ENCODE measurements at regions of chr18 and their contacts with region 1.

Region 1: GRCh38 chr18:2325308-2325849 is 245.9 kb downstream of the METTL4 start:
- DNase-seq: peak; percentile 37 to 91 (median 57)
- ATAC-seq: peak; percentile 93
- H3K4me3 ChIP-seq: no peak overlapping the region
- H3K27ac ChIP-seq: peak overlapping the region; percentile 62
- H3K4me1 ChIP-seq: peaks cover 4 to 30% of the 10 kb centered on the region in 2 experiments; a peak in 4 of 5 replicates
- H3K27me3 ChIP-seq: no peaks in the 10 kb centered on the region
- CTCF ChIP-seq: peak in 1 of 3 experiments; percentile 46; a peak in 2 of 6 replicates
- EP300 ChIP-seq: peak; percentile 97
- POLR2A ChIP-seq: no peak
- RAD21 ChIP-seq: peak; percentile 43 to 55

Region 2: GRCh38 chr18:1604751-1605150 is 720.6 kb before region 1 on chr18:
- CTCF ChIA-PET with region 1: no interaction called
- POLR2A ChIA-PET with region 1: no interaction called
- in situ Hi-C with region 1: no loop called
- intact Hi-C with region 1: no loop called
- DNase-seq: no peak
- ATAC-seq: no peak
- H3K4me3 ChIP-seq: no peak overlapping the region
- H3K27ac ChIP-seq: no peak overlapping the region
- H3K4me1 ChIP-seq: no peaks in the 10 kb centered on the region
- H3K27me3 ChIP-seq: no peaks in the 10 kb centered on the region
- CTCF ChIP-seq: no peak
- EP300 ChIP-seq: no peak
- POLR2A ChIP-seq: no peak
- RAD21 ChIP-seq: no peak

Region 3: DNA sequence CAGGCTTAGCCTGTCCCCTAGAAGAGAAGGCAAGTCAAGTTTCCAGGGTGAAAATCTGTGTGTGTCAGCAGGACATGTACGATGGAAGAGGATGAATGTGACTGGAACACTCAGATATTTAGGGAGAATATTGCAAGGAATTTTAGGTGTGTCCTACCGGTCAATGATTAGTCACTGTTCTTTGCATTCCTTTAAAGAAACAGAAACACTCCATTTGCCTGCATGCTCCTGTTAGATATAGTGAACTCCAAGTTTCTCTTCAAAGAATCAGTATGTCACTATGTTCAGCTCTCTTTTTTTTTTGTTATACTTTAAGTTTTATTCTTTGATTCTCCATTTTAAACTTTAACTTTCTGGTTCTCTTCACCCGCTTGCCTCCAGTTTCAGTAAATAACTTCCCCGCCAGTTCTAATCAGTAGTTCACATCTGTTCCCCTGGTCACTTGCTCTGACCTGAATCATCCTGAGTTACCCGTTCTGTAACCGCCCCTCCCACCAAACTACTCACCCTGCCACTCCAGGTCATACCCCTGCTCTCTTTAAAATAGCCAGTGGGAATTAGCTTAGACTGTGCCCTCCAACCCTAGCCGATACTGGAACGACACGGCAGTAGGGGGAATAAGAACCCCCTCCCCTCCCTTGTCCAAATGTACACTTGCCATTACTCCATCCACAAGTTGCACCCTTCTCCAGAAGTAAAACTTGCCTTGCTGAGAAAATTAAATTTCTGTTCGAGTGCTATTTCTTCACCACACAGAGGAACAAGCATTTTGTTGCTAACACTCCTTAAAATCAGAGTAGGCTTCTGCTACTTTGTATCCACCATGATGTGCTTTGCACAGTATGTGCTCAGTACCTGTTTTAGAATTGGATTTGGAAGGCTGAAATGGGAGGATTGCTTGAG is 22.5 kb before region 1 on chr18:
- CTCF ChIA-PET with region 1: no interaction called
- POLR2A ChIA-PET with region 1: interaction called, 6 read pairs
- in situ Hi-C with region 1: no loop called
- intact Hi-C with region 1: loop called (anchors 1 kb)
- DNase-seq: peak; percentile 77 to 93 (median 84)
- ATAC-seq: peak; percentile 93
- H3K4me3 ChIP-seq: no peak overlapping the region
- H3K27ac ChIP-seq: peak overlapping the region; percentile 96
- H3K4me1 ChIP-seq: peaks cover 12 to 47% of the 10 kb centered on the region in 2 experiments; a peak in 4 of 5 replicates
- H3K27me3 ChIP-seq: no peaks in the 10 kb centered on the region
- CTCF ChIP-seq: no peak
- EP300 ChIP-seq: peak; percentile 86
- POLR2A ChIP-seq: peak; percentile 53; the same call in 1 of the 2 replicates
- RAD21 ChIP-seq: 0 out of 4 replicates have a peak, but pooled peaks have one; percentile 8 to 17

Region 4: DNA sequence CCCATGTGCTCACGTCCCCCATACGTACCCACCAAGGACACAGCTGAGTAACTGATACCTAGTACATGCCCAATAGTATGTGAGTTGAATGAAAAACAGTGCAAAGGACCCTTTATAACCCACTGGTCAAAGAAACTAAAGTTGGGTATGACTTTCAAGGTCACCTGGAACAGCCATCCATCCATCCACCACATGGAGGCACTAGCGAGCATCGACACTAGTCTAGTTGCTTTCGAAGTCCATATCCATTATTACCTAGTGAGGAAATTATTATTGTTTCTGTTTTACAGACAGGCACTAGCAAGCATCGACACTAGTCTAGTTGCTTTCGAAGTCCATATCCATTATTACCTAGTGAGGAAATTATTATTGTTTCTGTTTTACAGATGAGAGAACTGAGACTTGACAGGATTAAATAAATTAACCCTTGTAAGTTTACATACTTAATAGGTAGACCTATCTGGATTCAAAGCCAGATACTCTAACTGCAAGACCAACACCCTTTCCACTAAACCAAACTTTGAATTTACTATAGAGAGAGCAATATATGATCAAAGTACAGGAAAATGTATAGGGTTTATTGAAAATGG is 12.3 kb after region 1 on chr18:
- CTCF ChIA-PET with region 1: no interaction called
- POLR2A ChIA-PET with region 1: interaction called, 16 read pairs
- in situ Hi-C with region 1: no loop called
- intact Hi-C with region 1: no loop called
- DNase-seq: peak; percentile 30 to 60 (median 40)
- ATAC-seq: peak; percentile 72
- H3K4me3 ChIP-seq: no peak overlapping the region
- H3K27ac ChIP-seq: no peak overlapping the region; the same call in 1 of the 3 replicates
- H3K4me1 ChIP-seq: peaks cover 4 to 13% of the 10 kb centered on the region in 2 experiments; a peak in 2 of 5 replicates
- H3K27me3 ChIP-seq: no peaks in the 10 kb centered on the region
- CTCF ChIP-seq: peak; percentile 40 to 71 (median 41); a peak in 4 of 6 replicates
- EP300 ChIP-seq: no peak
- POLR2A ChIP-seq: no peak
- RAD21 ChIP-seq: peak; percentile 17 to 59; a peak in 3 of 4 replicates

Measured in K562 (cell line).